ENCODE measurements at regions of chr18 and their contacts with region 1.

Region 1: DNA sequence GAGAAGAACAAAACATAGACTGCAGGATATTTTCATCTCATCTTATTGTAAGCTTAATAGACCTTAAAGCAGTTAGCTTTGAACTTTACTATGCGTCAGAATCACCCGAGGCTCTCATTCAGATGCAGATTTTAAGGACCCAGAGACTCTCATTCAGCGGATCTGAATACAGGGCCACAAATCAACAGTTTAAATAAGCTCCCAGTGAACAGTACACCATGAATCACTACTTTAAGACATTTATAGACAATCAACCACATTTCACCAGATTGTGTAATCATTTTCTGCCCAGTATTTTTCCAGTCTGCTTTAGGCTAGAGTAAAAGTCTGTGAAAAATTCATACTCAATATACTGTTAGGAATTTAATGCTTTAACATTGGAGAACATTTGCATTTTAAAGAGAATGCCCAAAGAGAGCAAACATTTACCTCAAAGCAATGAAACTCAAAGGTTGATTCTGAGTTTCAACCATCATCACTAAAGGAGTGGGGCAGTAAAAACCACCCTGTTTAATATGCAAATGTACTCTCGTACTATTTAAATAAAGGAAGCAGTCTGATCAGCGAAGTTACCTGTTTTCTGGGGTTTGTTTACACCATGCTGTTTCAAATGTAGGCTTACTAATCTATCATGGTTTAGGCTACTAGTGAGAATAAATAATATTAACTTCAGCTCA is 11.0 kb upstream of the ALPK2 start:
- DNase-seq: peak; percentile 49
- ATAC-seq: peak; percentile 53
- H3K4me3 ChIP-seq: no peak overlapping the region
- H3K4me3 Mint-ChIP-seq: no peak overlapping the region
- H3K27ac ChIP-seq: no peak overlapping the region
- H3K27ac Mint-ChIP-seq: peak overlapping the region; percentile 42
- H3K4me1 ChIP-seq: peaks cover 36% of the 10 kb centered on the region in 2 donors
- H3K4me1 Mint-ChIP-seq: peaks cover 25% of the 10 kb centered on the region
- H3K27me3 ChIP-seq: no peaks in the 10 kb centered on the region
- H3K27me3 Mint-ChIP-seq: no peaks in the 10 kb centered on the region
- CTCF ChIP-seq: no peak

Region 2: GRCh38 chr18:58584200-58585127 is 55.4 kb before region 1 on chr18:
- CTCF ChIA-PET with region 1: no interaction called
- POLR2A ChIA-PET with region 1: no interaction called
- intact Hi-C with region 1: loop called (anchors 10 kb)
- DNase-seq: no peak
- ATAC-seq: no peak
- H3K4me3 ChIP-seq: no peak overlapping the region
- H3K4me3 Mint-ChIP-seq: no peak overlapping the region
- H3K27ac ChIP-seq: no peak overlapping the region
- H3K27ac Mint-ChIP-seq: no peak overlapping the region
- H3K4me1 ChIP-seq: no peaks in the 10 kb centered on the region
- H3K4me1 Mint-ChIP-seq: peaks cover 9% of the 10 kb centered on the region
- H3K27me3 ChIP-seq: no peaks in the 10 kb centered on the region
- H3K27me3 Mint-ChIP-seq: no peaks in the 10 kb centered on the region
- CTCF ChIP-seq: no peak

Region 3: GRCh38 chr18:58618822-58619595 is 20.9 kb before region 1 on chr18:
- CTCF ChIA-PET with region 1: no interaction called
- POLR2A ChIA-PET with region 1: no interaction called
- intact Hi-C with region 1: no loop called
- DNase-seq: no peak
- ATAC-seq: no peak
- H3K4me3 ChIP-seq: no peak overlapping the region
- H3K4me3 Mint-ChIP-seq: no peak overlapping the region
- H3K27ac ChIP-seq: no peak overlapping the region
- H3K27ac Mint-ChIP-seq: no peak overlapping the region
- H3K4me1 ChIP-seq: peaks cover 14 to 15% of the 10 kb centered on the region in 2 donors
- H3K4me1 Mint-ChIP-seq: peaks cover 19% of the 10 kb centered on the region
- H3K27me3 ChIP-seq: no peaks in the 10 kb centered on the region
- H3K27me3 Mint-ChIP-seq: no peaks in the 10 kb centered on the region
- CTCF ChIP-seq: no peak

Region 4: GRCh38 chr18:58882044-58882443 is 242.2 kb after region 1 on chr18:
- CTCF ChIA-PET with region 1: no interaction called
- POLR2A ChIA-PET with region 1: no interaction called
- intact Hi-C with region 1: no loop called
- DNase-seq: no peak
- ATAC-seq: no peak
- H3K4me3 ChIP-seq: no peak overlapping the region
- H3K4me3 Mint-ChIP-seq: no peak overlapping the region
- H3K27ac ChIP-seq: no peak overlapping the region
- H3K27ac Mint-ChIP-seq: no peak overlapping the region
- H3K4me1 ChIP-seq: peaks cover 5 to 6% of the 10 kb centered on the region in 2 donors
- H3K4me1 Mint-ChIP-seq: peaks cover 17% of the 10 kb centered on the region
- H3K27me3 ChIP-seq: no peaks in the 10 kb centered on the region
- H3K27me3 Mint-ChIP-seq: no peaks in the 10 kb centered on the region
- CTCF ChIP-seq: no peak

Region 5: GRCh38 chr18:58960946-58961722 is 321.2 kb after region 1 on chr18:
- CTCF ChIA-PET with region 1: no interaction called
- POLR2A ChIA-PET with region 1: no interaction called
- intact Hi-C with region 1: no loop called
- DNase-seq: no peak
- ATAC-seq: no peak
- H3K4me3 ChIP-seq: no peak overlapping the region
- H3K4me3 Mint-ChIP-seq: peak overlapping the region; percentile 35
- H3K27ac ChIP-seq: peak overlapping the region in 1 of 2 donors; percentile 16
- H3K27ac Mint-ChIP-seq: peak overlapping the region; percentile 77
- H3K4me1 ChIP-seq: peaks cover 32 to 33% of the 10 kb centered on the region in 2 donors
- H3K4me1 Mint-ChIP-seq: peaks cover 50% of the 10 kb centered on the region
- H3K27me3 ChIP-seq: no peaks in the 10 kb centered on the region
- H3K27me3 Mint-ChIP-seq: no peaks in the 10 kb centered on the region
- CTCF ChIP-seq: no peak

Measured in B cell (primary cell).